Transverse colon (tissue), 4 donors: ENCODE measurements at regions of chr7 and their contacts with region 1.

Region 1: DNA sequence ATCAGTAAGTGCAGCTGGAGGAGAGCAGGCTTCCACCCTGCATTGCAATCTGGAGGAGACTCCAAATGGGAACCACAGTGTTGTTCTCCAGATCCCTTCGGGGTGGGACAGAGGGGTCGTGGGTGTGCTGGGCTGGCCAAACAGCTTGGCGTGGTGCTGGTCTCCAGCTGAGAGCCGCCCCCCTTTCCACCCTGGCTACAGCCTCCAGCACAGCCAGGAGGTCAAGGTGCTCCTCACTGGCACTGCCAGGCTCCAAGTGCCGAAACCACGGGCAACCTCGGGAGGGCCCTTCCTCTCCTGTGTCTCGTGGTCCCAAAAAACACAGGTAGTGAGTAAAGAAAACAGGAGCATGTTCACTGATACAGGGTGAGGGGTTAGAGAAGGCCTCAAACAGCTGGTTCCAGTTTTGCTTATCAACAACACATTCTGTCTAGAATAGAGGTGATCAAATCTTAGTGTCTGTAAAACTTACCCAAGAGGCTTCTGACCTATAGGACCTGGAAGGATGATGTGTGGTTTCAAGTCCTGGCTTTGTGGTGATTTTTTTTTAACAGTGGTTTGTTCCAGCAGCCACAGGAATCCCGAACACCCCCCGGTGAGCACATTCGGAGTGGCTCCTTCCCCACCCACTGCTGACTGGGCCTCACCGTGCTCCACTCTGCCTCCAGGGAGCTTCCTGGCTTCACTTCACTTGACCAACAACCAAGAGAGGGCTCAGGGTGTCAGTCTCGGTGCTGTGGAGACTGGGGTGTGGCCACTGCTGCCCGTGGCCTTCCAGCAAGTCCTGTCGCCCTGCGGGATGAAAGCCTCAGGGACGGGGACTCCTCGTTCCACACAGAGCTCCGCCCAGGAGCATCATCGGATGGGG is 31.2 kb upstream of the EN2 start:
- DNase-seq: no peak
- H3K4me3 ChIP-seq: no peak overlapping the region
- H3K27ac ChIP-seq: no peak overlapping the region
- H3K4me1 ChIP-seq: no peaks in the 10 kb centered on the region
- H3K27me3 ChIP-seq: peaks cover 43% of the 10 kb centered on the region
- CTCF ChIP-seq: no peak
- EP300 ChIP-seq: no peak
- POLR2A ChIP-seq: no peak

Region 2: GRCh38 chr7:155780884-155781283 is 354.1 kb after region 1 on chr7:
- in situ Hi-C with region 1: no loop called
- intact Hi-C with region 1: loop called (anchors 5 kb)
- DNase-seq: no peak
- H3K4me3 ChIP-seq: no peak overlapping the region
- H3K27ac ChIP-seq: no peak overlapping the region
- H3K4me1 ChIP-seq: no peaks in the 10 kb centered on the region
- H3K27me3 ChIP-seq: no peaks in the 10 kb centered on the region
- CTCF ChIP-seq: no peak
- EP300 ChIP-seq: no peak
- POLR2A ChIP-seq: no peak